Natural killer cell (primary cell): ENCODE measurements at regions of chr17 and their contacts with region 1.

Region 1: DNA sequence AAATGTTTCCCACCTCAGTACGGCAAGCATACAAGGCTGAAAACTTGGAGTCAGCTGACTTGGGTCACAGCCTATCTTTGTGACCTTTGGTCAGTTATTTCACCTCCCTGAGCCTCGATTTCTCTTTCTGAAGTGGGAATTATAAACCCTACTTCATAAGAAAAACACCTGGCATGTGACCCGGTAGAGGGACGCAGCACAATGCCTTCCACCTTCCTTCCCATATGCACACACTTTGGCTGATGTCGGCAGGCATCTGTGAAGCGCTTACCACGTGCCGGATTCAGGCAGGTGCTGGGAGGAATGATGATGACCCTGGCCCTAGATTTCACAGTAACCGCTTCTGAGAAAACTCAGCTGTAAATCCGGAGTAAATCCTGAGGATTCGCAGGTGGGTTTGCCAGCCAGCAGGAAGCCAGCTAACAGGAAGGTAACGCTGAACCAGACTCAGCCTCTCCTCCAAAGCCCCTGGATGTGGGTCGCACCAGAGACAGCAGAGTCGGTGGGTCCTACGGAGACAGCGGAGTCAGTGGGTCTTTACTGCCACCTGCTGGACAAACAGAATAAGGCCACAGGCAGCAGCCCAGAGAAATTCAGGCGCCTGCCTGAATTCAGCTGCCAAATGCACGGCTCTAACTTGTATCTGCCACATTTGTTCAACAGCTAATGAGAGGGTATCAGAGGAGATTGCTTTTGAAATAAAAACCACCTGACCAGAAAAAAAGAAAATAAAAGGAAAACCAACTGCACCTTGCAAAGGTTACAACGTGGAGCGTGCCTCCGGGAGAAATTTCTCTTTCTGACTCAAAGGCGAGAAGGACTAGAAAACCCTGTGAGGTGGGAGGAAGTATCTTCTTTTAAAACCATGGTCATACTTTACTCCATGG is 16.6 kb downstream of the COPRS start:
- DNase-seq: peak; percentile 41 to 86
- ATAC-seq: peak; percentile 77 to 93 (median 89)
- H3K4me3 ChIP-seq: no peak overlapping the region
- H3K4me3 Mint-ChIP-seq: no peak overlapping the region
- H3K27ac ChIP-seq: no peak overlapping the region
- H3K27ac Mint-ChIP-seq: no peak overlapping the region
- H3K4me1 ChIP-seq: peaks cover 4% of the 10 kb centered on the region
- H3K4me1 Mint-ChIP-seq: no peaks in the 10 kb centered on the region
- H3K27me3 ChIP-seq: peaks cover 3% of the 10 kb centered on the region
- H3K27me3 Mint-ChIP-seq: peaks cover 3 to 6% of the 10 kb centered on the region in 2 donors
- CTCF ChIP-seq: peak; percentile 91

Region 2: DNA sequence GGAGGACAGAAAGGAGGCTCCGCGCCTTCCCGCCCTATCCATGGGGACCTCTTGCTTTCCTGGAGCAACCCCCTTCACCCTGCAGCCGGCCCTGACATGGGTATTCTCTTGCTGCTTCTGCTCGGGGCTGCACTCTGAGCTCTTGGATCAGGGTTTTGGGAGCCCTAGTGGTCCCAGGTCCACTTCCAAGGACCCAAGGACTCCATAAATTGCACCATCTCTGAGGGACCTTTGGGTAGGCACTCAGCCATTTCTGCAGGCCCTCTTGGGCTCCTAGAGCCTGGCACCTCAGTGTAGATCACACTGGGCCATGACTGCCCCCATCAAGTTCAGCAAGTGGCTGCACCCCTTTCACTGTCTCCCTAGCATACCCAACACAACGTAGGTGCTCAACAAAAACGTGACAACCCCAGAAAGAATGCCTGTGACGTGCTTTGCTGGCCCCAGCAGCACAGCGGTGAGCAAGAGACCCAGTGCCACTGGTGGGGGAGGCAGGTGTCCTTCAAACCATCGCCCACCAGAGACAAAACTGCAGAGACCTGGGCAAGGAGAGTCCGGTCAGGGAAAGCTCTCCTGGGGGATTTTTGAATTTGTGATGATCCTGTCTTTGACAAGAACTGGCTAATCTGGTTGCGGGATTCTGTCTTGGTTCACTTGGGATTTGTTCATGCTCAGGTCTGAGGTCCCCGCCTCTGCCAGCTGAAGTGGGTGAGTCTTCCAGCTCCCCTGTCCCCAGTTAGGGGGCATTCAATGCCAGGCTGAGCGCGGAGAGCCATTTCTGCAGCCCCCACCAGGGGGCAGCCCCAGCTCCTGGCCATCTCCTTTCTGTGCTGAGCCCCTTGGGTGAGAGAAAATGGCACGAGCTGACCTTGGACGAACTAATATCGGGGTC is 453.4 kb before region 1 on chr17:
- intact Hi-C with region 1: loop called (anchors 2 kb)
- DNase-seq: peak in 1 of 2 donors; percentile 67
- ATAC-seq: peak; percentile 54 to 68 (median 64)
- H3K4me3 ChIP-seq: no peak overlapping the region
- H3K4me3 Mint-ChIP-seq: no peak overlapping the region
- H3K27ac ChIP-seq: no peak overlapping the region
- H3K27ac Mint-ChIP-seq: no peak overlapping the region
- H3K4me1 ChIP-seq: peaks cover 15% of the 10 kb centered on the region
- H3K4me1 Mint-ChIP-seq: peaks cover 10 to 20% of the 10 kb centered on the region in 2 donors
- H3K27me3 ChIP-seq: peaks cover 23% of the 10 kb centered on the region
- H3K27me3 Mint-ChIP-seq: peaks cover 31 to 36% of the 10 kb centered on the region in 2 donors
- CTCF ChIP-seq: peak; percentile 57

Region 3: GRCh38 chr17:31437720-31438420 is 404.6 kb before region 1 on chr17:
- intact Hi-C with region 1: loop called (anchors 2 kb)
- DNase-seq: no peak
- ATAC-seq: no peak
- H3K4me3 ChIP-seq: no peak overlapping the region
- H3K4me3 Mint-ChIP-seq: no peak overlapping the region
- H3K27ac ChIP-seq: no peak overlapping the region
- H3K27ac Mint-ChIP-seq: no peak overlapping the region
- H3K4me1 ChIP-seq: peaks cover 20% of the 10 kb centered on the region
- H3K4me1 Mint-ChIP-seq: peaks cover 6 to 16% of the 10 kb centered on the region in 2 donors
- H3K27me3 ChIP-seq: no peaks in the 10 kb centered on the region
- H3K27me3 Mint-ChIP-seq: peaks cover 0 to 7% of the 10 kb centered on the region in 2 donors
- CTCF ChIP-seq: no peak

Region 4: GRCh38 chr17:31549525-31550388 is 292.7 kb before region 1 on chr17:
- intact Hi-C with region 1: loop called (anchors 10 kb)
- DNase-seq: peak; percentile 83 to 92
- ATAC-seq: peak; percentile 86 to 94 (median 91)
- H3K4me3 ChIP-seq: peak overlapping the region; percentile 72
- H3K4me3 Mint-ChIP-seq: peak overlapping the region; percentile 74
- H3K27ac ChIP-seq: peak overlapping the region; percentile 54
- H3K27ac Mint-ChIP-seq: peak overlapping the region; percentile 68 to 80
- H3K4me1 ChIP-seq: peaks cover 12% of the 10 kb centered on the region
- H3K4me1 Mint-ChIP-seq: peaks cover 9 to 17% of the 10 kb centered on the region in 2 donors
- H3K27me3 ChIP-seq: no peaks in the 10 kb centered on the region
- H3K27me3 Mint-ChIP-seq: no peaks in the 10 kb centered on the region
- CTCF ChIP-seq: no peak

Region 5: DNA sequence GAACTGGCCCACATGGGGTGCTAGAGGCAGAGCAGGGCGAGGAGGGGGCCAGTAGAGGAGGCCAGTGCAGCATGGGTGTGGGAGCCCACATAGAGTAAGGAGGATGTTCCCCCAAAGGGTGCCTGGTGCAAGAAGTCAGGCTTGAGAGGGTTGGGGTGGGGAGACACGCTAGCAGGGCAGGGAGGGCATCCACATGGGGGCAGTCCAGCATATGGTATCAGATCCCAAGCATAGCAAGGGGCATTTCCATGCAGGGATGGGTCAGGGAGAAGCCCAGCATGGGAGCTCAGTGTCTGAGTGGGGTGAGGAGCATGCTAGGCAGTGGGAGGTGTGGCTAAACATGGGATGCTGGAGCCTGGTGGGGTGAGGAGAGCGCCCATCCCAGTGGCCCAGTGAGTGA is 197.1 kb before region 1 on chr17:
- intact Hi-C with region 1: loop called (anchors 1 kb)
- DNase-seq: no peak
- ATAC-seq: no peak
- H3K4me3 ChIP-seq: no peak overlapping the region
- H3K4me3 Mint-ChIP-seq: no peak overlapping the region
- H3K27ac ChIP-seq: no peak overlapping the region
- H3K27ac Mint-ChIP-seq: no peak overlapping the region
- H3K4me1 ChIP-seq: no peaks in the 10 kb centered on the region
- H3K4me1 Mint-ChIP-seq: no peaks in the 10 kb centered on the region
- H3K27me3 ChIP-seq: no peaks in the 10 kb centered on the region
- H3K27me3 Mint-ChIP-seq: peaks cover 3 to 20% of the 10 kb centered on the region in 2 donors
- CTCF ChIP-seq: no peak

Region 6: GRCh38 chr17:31825961-31826691 is 16.3 kb before region 1 on chr17:
- intact Hi-C with region 1: no loop called
- DNase-seq: no peak
- ATAC-seq: no peak
- H3K4me3 ChIP-seq: no peak overlapping the region
- H3K4me3 Mint-ChIP-seq: no peak overlapping the region
- H3K27ac ChIP-seq: no peak overlapping the region
- H3K27ac Mint-ChIP-seq: no peak overlapping the region
- H3K4me1 ChIP-seq: no peaks in the 10 kb centered on the region
- H3K4me1 Mint-ChIP-seq: no peaks in the 10 kb centered on the region
- H3K27me3 ChIP-seq: no peaks in the 10 kb centered on the region
- H3K27me3 Mint-ChIP-seq: peaks cover 7% of the 10 kb centered on the region in 2 donors
- CTCF ChIP-seq: no peak